Caco-2 (cell line): ENCODE measurements at regions of chr10 and their contacts with region 1.

Region 1: DNA sequence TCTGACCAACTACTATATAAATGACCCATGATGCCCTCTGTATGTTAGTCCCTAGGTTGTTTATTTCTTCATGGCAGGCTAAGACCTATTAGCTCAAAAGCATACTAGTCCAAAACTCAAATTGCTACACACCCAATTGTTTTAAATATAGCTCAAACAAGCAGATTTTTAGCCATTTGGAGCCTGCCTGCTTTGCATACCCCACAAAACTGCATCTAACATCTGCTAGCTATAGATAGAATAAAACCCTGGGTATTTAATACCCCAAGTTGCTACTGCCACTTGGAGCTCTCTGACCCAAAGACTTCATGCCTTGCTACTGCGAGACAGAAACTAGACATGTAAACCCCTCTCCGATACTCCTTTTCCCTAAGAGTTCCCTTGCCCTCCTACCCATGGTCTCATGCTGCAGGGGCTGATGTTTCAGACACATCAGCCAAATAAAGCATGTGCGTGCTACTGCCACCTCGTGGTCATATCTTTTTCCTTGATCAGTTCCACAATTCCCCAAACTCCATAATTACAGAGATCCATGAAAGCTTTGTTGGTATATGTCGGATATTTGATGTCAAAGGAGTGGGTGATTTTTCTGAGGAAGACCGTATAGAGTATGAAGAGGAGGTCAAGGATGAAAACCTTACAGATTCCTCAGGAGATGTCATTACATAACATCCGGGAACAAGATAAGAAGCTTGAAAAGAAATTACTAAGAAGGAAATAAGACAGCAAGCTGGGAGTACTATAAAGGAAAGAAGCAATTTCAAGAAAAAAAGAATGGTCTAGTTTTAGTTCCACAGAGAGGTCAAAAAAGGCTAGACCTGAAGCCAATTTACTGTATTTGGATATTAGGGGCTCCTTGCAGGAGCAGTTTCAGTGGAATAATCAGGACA is 386.6 kb downstream of the SH2D4B start:
- DNase-seq: peak; percentile 46 to 66
- H3K4me3 ChIP-seq: no peak overlapping the region
- H3K4me3 Mint-ChIP-seq: no peak overlapping the region
- H3K27ac Mint-ChIP-seq: no peak overlapping the region
- H3K4me1 ChIP-seq: no peaks in the 10 kb centered on the region
- H3K4me1 Mint-ChIP-seq: no peaks in the 10 kb centered on the region
- H3K27me3 ChIP-seq: no peaks in the 10 kb centered on the region
- H3K27me3 Mint-ChIP-seq: peaks cover 14% of the 10 kb centered on the region
- CTCF ChIP-seq: peak; percentile 52 to 75

Region 2: DNA sequence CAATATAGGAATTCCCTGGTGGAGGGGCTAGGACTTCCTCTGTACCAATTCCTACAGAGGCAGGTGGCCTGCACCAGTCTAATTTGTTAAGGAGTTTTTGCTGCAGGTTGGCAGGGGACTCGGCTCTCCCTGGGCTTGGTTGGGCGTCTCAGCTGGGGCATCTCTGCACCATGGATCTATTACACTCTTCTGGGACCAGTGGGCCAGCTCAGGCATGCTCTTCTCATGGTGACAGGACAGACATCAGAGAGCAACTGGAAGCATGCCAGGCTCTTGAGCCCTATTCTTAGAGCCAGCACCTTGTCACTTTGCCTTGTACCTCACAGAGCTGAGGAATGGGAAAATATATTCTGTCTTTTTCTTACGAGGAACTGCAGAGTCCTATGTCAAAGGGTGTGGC is 312.0 kb before region 1 on chr10:
- CTCF ChIA-PET with region 1: no interaction called
- POLR2A ChIA-PET with region 1: no interaction called
- intact Hi-C with region 1: no loop called
- DNase-seq: no peak
- H3K4me3 ChIP-seq: no peak overlapping the region
- H3K4me3 Mint-ChIP-seq: no peak overlapping the region
- H3K27ac Mint-ChIP-seq: no peak overlapping the region
- H3K4me1 ChIP-seq: no peaks in the 10 kb centered on the region
- H3K4me1 Mint-ChIP-seq: no peaks in the 10 kb centered on the region
- H3K27me3 ChIP-seq: no peaks in the 10 kb centered on the region
- H3K27me3 Mint-ChIP-seq: peaks cover 3% of the 10 kb centered on the region
- CTCF ChIP-seq: no peak

Region 3: DNA sequence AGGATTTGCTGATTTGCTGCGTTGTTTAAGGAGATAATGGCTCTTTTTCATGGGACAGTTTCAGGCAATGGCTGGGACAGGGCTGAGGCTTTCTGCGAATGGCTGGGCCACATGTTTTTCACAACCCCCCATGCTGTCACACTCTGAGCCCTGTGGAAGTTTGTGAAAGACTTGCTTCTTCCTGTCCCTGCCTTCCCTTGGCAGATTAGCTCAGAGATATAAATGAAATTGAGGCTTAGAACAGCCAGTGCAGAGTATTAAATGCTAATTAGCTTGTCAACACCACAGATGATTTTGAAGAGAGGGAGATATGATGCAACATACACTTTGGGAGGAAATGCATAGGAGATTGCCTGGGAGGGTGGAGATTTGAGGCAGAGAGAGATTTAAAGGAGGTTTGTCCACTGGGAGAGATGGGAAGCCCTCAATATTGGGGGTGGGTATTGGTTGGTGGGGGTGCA is 154.6 kb before region 1 on chr10:
- CTCF ChIA-PET with region 1: no interaction called
- POLR2A ChIA-PET with region 1: no interaction called
- intact Hi-C with region 1: loop called (anchors 5 kb)
- DNase-seq: no peak
- H3K4me3 ChIP-seq: no peak overlapping the region
- H3K4me3 Mint-ChIP-seq: peak overlapping the region; percentile 23
- H3K27ac Mint-ChIP-seq: peak overlapping the region; percentile 67
- H3K4me1 ChIP-seq: peaks cover 38% of the 10 kb centered on the region
- H3K4me1 Mint-ChIP-seq: peaks cover 39% of the 10 kb centered on the region
- H3K27me3 ChIP-seq: no peaks in the 10 kb centered on the region
- H3K27me3 Mint-ChIP-seq: peaks cover 2% of the 10 kb centered on the region
- CTCF ChIP-seq: no peak

Region 4: DNA sequence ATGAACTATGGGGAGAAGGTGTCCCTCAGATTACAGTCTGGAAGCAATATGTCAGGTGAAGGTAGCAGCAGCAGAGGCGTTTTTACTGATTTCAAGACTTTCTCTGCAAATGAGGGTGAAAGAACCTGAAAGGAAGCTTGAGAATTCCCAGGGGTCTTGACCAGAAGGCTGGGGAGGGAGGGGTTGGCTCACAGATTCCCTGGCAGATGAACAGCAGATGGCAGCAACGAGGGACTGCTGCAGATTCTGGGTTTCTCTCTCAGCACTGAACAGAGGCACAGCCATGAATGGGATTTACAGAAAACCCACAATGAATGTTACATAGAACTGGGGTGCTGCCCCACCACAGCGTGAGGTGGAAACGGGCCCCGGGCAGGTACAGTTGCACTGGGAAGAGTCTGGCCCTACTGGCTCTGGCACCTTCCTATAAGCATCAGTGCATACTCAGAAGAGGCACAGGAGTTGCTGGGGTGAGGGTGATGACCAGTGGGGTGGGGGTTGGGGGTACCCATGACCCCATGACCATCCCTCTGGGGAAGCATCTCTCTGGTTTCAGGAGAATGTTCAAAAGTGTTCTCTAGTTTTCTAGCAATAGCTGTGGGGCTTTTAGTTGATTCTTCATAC is 68.8 kb before region 1 on chr10:
- CTCF ChIA-PET with region 1: no interaction called
- POLR2A ChIA-PET with region 1: no interaction called
- intact Hi-C with region 1: loop called (anchors 2 kb)
- DNase-seq: peak in 1 of 2 experiments; percentile 39
- H3K4me3 ChIP-seq: no peak overlapping the region
- H3K4me3 Mint-ChIP-seq: no peak overlapping the region
- H3K27ac Mint-ChIP-seq: no peak overlapping the region
- H3K4me1 ChIP-seq: no peaks in the 10 kb centered on the region
- H3K4me1 Mint-ChIP-seq: no peaks in the 10 kb centered on the region
- H3K27me3 ChIP-seq: no peaks in the 10 kb centered on the region
- H3K27me3 Mint-ChIP-seq: peaks cover 5% of the 10 kb centered on the region
- CTCF ChIP-seq: peak; percentile 63 to 71